Calu3 (cell line): ENCODE measurements at regions of chr3 and their contacts with region 1.

Region 1: GRCh38 chr3:25648107-25648535 is 16.6 kb downstream of the TOP2B start:
- DNase-seq: peak; percentile 80
- H3K4me3 Mint-ChIP-seq: no peak overlapping the region
- H3K27ac Mint-ChIP-seq: no peak overlapping the region
- H3K4me1 Mint-ChIP-seq: peaks cover 26% of the 10 kb centered on the region
- H3K27me3 Mint-ChIP-seq: no peaks in the 10 kb centered on the region
- CTCF ChIP-seq: peak; percentile 70

Region 2: GRCh38 chr3:25664810-25665314 is 16.7 kb after region 1 on chr3 and contains the start of gene TOP2B:
- CTCF ChIA-PET with region 1: interaction called, 3 read pairs
- intact Hi-C with region 1: loop called (anchors 2 kb)
- DNase-seq: peak; percentile 94
- H3K4me3 Mint-ChIP-seq: peak within 1 kb of the TSS; percentile 98
- H3K27ac Mint-ChIP-seq: peak within 1 kb of the TSS; percentile 99
- H3K4me1 Mint-ChIP-seq: peaks cover 35% of the 10 kb centered on the region
- H3K27me3 Mint-ChIP-seq: no peaks in the 10 kb centered on the region
- CTCF ChIP-seq: no peak
- total RNA-seq, gene TOP2B: 99.9 and 117 TPM in 2 replicates

Region 3: GRCh38 chr3:25831578-25831977 is 183.5 kb after region 1 on chr3:
- CTCF ChIA-PET with region 1: interaction called, 8 read pairs
- intact Hi-C with region 1: loop called (anchors 5 kb)
- DNase-seq: no peak
- H3K4me3 Mint-ChIP-seq: no peak overlapping the region
- H3K27ac Mint-ChIP-seq: no peak overlapping the region
- H3K4me1 Mint-ChIP-seq: no peaks in the 10 kb centered on the region
- H3K27me3 Mint-ChIP-seq: no peaks in the 10 kb centered on the region
- CTCF ChIP-seq: no peak